GM10248 (cell line): ENCODE measurements at regions of chr11 and their contacts with region 1.

Region 1: DNA sequence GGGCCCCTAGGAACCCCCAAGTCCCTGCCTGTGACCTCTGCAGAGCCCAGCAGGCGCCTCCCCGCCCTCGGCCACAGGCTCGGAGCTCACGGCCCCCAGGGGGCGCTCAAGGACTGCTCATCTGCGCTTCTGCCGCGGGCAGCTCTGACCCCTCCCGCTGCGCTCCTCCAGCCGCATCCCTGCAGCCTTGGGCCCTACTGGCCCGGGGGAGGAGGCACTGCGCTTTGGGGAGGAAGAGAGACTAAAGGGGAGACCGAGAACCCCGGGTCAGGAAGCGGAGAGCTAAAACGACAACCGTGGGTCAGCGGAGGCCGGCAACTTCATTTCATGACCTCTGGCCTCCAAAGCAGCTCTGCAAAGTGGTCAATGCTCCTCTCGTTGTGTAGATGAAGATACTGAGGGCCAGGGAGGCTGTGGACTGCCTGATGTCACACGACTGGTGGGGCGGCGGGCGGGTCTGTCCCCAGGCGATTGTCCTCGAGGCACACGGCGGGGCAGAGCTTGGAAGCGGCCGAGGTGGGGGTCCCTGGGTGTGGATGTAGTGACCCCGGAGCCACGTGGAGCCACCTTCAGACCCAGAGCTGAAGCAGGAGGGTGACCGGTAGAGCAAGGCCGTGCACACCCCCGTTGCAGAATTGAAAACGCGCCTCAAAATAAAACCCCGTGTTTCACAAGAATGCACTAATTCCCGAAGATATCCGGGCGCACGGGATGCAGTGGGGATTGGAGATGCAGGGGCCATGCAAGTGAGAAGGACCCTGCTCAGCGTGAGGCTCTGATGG is 2.7 kb upstream of the KRTAP5-6 start:
- DNase-seq: peak; percentile 92
- CTCF ChIP-seq: peak; percentile 93

Region 2: GRCh38 chr11:1598816-1599215 is 95.4 kb before region 1 on chr11:
- CTCF ChIA-PET with region 1: no interaction called
- POLR2A ChIA-PET with region 1: no interaction called
- DNase-seq: no peak
- CTCF ChIP-seq: no peak

Region 3: DNA sequence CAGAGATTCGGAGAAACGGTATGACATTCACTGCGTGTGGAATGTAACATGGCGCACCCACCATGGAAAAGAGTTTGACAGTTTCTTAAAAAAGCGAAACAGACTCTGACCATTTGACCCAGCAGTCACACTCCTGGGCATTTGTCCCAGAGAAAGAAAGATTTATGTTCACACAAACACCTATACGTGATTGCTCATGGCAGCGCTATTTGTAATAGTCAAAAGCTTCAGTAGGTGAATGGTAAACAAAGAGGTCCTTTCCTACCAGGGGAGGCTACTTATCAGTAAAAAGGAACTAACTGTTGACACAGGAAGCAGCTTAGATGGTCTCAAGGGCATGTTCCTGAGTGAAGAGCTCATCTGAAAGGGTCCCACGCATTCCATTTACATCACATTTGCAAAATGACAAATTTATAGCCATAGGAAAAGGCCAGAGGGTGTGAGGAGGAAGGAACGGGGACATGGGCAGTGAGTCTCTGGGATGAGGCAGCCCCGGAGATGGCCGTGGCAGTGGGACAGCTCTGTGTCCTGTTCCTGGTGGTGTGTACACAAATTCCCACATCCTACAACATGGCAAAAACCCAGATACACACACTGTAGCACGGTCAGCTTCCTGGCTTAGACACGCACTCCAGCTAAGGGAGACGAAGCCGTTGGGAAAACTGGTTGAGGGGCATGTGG is 11.9 kb before region 1 on chr11:
- CTCF ChIA-PET with region 1: interaction called, 51 read pairs
- POLR2A ChIA-PET with region 1: no interaction called
- DNase-seq: no peak
- CTCF ChIP-seq: no peak

Region 4: DNA sequence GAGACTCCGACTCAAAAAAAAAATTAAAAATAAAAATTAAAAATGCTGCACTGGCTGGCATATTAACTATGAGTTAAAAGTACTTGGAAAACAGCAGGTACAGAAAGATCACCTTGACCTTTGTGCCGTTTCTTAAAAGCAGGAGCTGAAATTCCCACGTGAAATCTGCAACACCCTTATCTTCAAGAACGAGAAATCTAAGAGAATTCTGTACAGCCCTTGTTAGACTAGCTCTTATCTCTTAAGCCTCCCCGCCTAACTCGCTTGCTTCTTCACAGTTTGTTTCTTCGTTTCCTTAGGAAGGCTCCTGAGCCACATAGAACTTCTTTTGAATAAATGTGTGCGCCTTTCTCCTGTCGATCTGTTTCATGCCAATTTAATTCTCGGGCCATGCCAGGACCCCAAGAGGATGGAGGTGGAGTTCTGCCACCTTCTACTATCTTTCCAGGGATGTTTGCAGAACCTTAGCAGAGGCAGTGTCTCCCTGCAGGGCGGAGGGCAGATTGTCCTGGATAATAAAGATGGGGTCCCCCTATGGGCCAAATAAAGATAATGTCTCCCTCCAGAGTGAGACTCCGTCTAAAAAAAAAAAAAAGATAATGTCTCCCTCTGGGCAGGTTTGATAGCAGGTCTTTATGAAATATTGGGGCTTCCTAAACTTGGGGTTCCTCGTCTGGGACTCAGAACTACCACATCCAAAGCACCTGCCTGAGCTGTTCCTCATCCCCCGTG is 113.2 kb after region 1 on chr11:
- CTCF ChIA-PET with region 1: interaction called, 18 read pairs
- POLR2A ChIA-PET with region 1: no interaction called
- DNase-seq: no peak
- CTCF ChIP-seq: no peak

Region 5: GRCh38 chr11:1837171-1838076 is 143.2 kb after region 1 on chr11:
- CTCF ChIA-PET with region 1: interaction called, 352 read pairs
- POLR2A ChIA-PET with region 1: no interaction called
- DNase-seq: peak; percentile 89
- CTCF ChIP-seq: peak; percentile 94

Region 6: DNA sequence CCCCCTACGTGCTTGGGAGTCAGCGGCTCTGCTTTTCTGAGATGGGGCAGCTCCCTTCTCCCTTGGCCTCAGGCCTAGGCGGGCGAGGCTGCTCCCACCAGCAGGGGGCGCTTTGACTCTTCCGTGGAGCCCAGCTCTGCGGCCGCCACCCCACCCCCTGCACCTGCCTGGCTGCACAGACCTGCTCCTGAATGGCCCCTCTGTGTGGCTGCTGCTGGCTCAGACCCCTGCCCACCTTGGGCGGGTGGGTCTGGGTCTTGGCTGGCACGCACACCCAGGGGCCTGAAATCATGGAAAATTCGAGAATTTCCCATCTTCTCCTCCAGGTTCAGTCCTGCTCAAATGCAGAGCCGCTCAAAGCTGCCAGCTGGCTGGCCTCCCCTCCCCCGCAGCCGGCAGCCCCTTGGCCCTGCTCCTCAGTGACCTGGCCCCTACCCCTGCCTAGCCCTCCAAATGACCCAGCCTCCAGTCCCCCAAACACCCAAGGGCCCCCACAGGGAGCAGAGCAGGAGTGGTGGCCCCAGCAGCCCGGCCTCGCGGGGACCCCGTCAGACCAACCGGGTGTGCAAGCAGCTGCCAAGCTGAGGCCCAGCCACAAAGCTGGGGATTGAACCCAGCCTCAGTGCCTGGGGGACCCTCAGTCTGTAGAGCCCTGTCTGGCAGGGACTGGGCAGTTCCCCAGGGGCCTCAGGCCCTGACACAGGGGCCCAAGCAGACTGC is 188.4 kb after region 1 on chr11:
- CTCF ChIA-PET with region 1: interaction called, 11 read pairs
- POLR2A ChIA-PET with region 1: no interaction called
- DNase-seq: peak; percentile 90
- CTCF ChIP-seq: peak; percentile 96

Region 7: GRCh38 chr11:1908618-1909017 is 214.4 kb after region 1 on chr11:
- CTCF ChIA-PET with region 1: no interaction called
- POLR2A ChIA-PET with region 1: no interaction called
- DNase-seq: no peak
- CTCF ChIP-seq: peak; percentile 4

Region 8: GRCh38 chr11:2036863-2037486 is 342.7 kb after region 1 on chr11:
- CTCF ChIA-PET with region 1: interaction called, 13 read pairs
- POLR2A ChIA-PET with region 1: no interaction called
- DNase-seq: no peak
- CTCF ChIP-seq: no peak